BJ (cell line): ENCODE measurements at regions of chr3 and their contacts with region 1.

Region 1: GRCh38 chr3:112293368-112294321 is at the start of gene SLC9C1:
- DNase-seq: peak; percentile 15
- H3K4me3 ChIP-seq: peak within 1 kb of the TSS; percentile 15
- H3K27me3 ChIP-seq: no peaks in the 10 kb centered on the region
- CTCF ChIP-seq: peak; percentile 70
- polyA plus RNA-seq, gene SLC9C1: not detected in 2 replicates

Region 2: DNA sequence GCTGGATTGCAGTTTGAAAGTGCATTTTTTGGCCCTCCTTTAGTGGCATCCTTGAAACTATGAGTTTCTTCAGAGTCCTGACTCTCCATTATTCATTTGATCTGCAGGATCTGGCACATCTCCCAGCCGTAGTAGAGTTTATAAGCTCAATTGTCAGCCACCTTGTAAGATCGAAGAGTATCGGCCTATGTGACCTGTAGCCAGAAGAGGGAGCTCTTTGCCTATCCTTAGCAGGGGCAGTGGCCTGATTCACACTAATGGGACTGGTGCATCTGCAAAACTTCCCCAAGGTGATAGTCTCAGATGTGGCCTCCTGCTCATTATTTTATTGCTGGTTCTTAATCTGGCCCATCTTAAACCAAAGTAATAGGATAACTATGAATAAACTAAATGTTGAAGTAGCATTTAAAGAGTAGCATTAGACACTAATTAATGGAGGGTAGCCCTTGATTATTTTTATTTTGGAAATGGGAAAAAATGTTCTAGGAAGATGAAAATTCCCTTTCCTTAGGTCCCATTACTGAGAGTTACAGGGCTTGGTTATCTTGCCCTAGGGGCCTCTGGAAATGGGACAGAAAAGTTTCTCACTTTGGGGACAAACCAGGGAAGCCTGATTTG is 181.8 kb before region 1 on chr3:
- CTCF ChIA-PET with region 1: interaction called, 13 read pairs
- POLR2A ChIA-PET with region 1: no interaction called
- DNase-seq: no peak
- H3K4me3 ChIP-seq: no peak overlapping the region
- H3K27me3 ChIP-seq: no peaks in the 10 kb centered on the region
- CTCF ChIP-seq: peak; percentile 89

Region 3: DNA sequence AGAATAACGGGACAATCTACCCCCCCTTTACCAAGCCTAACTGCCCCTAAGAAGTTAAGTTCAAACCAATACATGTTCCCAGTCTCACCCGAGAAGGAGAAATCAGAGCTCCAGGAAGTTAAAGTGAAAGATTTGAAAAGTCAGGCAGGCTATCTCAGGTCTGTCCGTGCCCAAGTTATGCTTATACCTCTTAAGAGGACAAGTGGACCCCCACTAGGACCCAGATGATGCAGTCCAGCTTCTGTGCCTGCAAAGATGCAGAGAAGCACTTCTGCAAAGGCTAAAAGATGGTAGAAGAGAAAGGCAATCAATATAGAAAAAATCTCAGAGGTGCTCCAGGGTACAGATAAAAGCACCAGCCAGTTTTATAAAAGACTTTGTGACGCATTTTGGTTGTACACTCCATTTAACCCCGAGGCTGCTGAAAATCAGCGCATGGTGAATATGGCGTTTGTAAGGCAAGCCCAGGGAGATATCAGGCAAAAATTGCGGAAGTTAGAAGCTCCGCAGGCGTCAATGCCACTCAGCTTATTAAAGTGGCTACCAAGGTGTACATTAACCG is 10.2 kb after region 1 on chr3:
- CTCF ChIA-PET with region 1: interaction called, 21 read pairs
- POLR2A ChIA-PET with region 1: no interaction called
- DNase-seq: no peak
- H3K4me3 ChIP-seq: peak overlapping the region; percentile 40
- H3K27me3 ChIP-seq: no peaks in the 10 kb centered on the region
- CTCF ChIP-seq: no peak

Region 4: DNA sequence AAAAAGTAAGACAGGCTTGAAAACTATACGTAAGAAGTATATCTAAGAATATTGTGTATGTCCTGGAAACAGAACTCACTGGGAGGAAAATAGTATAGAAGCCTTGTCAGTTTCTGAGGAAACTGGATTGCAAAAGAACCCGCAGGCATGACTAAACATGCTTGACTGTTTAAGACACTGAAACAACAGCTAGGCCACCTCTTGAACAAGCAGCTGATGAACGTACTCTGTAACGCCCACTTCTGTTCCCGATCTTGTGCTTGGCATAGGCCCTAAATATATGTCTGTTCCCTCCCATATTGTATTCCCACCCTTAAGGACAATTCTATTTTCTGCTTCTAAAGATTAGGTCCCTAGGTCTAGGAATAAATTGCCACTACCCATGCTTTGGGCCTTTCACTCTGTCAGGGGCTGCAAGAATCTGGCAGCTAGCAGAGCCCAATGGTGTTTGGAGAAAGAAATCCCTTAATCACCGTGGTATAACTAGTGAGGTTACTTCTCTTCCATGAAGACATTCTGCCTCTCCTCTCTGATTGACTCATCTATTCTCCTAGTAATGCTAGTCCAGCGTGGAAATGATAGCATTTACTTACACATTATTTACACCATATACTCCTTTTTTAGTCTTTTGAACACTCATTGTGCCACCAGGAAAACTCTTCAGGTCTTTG is 85.5 kb after region 1 on chr3:
- CTCF ChIA-PET with region 1: no interaction called
- POLR2A ChIA-PET with region 1: no interaction called
- DNase-seq: no peak
- H3K4me3 ChIP-seq: no peak overlapping the region
- H3K27me3 ChIP-seq: no peaks in the 10 kb centered on the region
- CTCF ChIP-seq: no peak

Region 5: GRCh38 chr3:112437146-112438022 is 143.7 kb after region 1 on chr3:
- CTCF ChIA-PET with region 1: interaction called, 19 read pairs
- POLR2A ChIA-PET with region 1: no interaction called
- DNase-seq: no peak
- H3K4me3 ChIP-seq: no peak overlapping the region
- H3K27me3 ChIP-seq: peaks cover 3% of the 10 kb centered on the region; the same call in 1 of the 2 replicates
- CTCF ChIP-seq: peak; percentile 57

Region 6: GRCh38 chr3:112531358-112531781 is 237.7 kb after region 1 on chr3:
- CTCF ChIA-PET with region 1: interaction called, 10 read pairs
- POLR2A ChIA-PET with region 1: no interaction called
- DNase-seq: no peak
- H3K4me3 ChIP-seq: no peak overlapping the region
- H3K27me3 ChIP-seq: no peaks in the 10 kb centered on the region
- CTCF ChIP-seq: peak; percentile 40; the same call in 1 of the 2 replicates